ENCODE measurements at regions of chr14 and their contacts with region 1.

Region 1: DNA sequence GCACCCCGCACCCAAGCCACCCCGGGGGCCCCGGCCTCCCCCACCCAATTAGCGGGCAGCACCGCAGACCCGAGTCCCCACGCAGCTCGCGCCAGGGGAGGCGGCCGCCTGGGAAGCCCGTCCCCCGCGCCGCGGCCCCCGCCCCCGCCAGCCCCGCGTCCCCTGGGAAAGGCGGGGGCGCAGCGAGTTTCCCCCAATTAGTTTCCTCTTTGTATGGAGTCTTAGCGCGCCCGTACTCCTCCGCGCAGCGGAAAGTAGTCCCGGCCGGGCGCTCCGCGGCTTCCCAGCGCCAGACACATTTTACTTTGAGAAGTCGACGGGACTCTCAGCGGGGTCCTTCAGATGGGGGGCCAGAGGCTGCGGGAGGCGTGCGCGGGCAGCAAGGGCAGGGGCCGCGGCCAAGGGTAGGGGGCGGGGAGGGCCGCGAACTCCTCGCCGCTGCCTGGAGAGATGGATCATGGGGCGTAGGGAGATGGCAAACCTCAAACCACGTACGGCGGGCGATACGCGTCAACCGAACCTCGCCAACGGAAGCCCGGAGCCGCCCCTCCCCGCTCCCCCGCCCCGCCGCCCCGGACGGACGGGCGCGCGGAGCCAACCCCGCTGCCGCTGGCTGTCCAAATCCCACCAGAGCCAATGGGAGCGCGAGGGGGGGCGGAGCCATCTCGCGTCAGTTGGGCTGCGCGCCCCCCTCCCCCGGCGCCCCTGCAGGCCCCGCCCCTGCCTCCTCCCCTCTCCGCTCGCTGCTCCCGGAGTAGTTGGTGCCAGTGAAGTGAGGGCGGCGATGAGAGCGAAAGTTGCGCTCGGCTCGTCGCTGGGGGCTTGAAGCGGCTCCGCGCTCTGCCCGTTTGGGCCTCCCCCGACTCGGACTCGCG is at the start of gene RCOR1:
- DNase-seq: peak; percentile 61
- H3K4me3 ChIP-seq: peak within 1 kb of the TSS; percentile 91
- H3K27me3 ChIP-seq: no peaks in the 10 kb centered on the region
- CTCF ChIP-seq: no peak
- polyA plus RNA-seq, gene RCOR1: 7.9 and 11.8 TPM in 2 replicates

Region 2: DNA sequence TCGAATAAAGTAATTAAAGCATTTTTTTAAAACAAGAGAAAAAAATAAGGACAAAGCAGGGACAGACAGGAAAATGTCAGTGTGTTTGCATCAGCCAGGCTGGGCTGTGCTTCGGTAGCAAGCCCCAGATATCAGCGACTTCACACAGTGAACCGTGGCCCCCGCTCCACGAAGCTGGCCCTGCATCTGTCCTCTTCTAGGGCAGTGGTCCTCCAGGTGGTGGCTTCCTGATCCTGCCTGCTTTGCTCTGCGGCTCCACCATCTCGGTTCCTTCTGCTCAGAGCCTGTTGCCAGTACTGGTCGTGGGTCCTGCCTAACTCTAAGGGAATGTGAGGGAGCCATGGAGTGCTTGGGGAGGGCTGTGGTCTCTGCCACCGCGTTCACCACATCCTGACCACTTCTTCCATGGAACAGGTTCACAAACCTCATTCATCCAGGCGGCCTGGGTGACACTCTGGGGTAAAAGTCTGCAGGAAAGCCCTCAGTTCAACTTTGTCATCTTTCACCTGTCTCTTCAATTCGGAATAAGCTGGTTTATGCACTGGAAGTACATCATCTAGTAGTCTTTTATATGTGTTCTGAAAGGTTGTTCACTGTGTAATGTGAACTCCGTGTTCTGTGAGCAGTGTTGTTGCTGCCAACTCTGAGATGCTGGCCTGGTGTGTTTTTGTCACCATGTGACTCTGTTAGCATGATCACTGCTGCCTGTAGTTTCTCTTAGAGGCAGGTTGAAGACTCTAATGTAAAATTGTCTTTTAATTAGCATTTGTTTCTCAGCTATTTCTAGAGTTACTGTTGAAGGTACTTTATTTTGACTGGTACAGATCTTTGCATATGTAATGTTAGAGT is 130.4 kb before region 1 on chr14:
- CTCF ChIA-PET with region 1: no interaction called
- POLR2A ChIA-PET with region 1: no interaction called
- DNase-seq: no peak
- H3K4me3 ChIP-seq: no peak overlapping the region
- H3K27me3 ChIP-seq: no peaks in the 10 kb centered on the region
- CTCF ChIP-seq: no peak

Region 3: GRCh38 chr14:102524466-102525218 is 67.5 kb before region 1 on chr14:
- CTCF ChIA-PET with region 1: interaction called, 25 read pairs
- POLR2A ChIA-PET with region 1: no interaction called
- DNase-seq: peak; percentile 90
- H3K4me3 ChIP-seq: peak overlapping the region; percentile 73
- H3K27me3 ChIP-seq: no peaks in the 10 kb centered on the region
- CTCF ChIP-seq: peak; percentile 99

Region 4: GRCh38 chr14:102579696-102580334 is 12.3 kb before region 1 on chr14:
- CTCF ChIA-PET with region 1: interaction called, 6 read pairs
- POLR2A ChIA-PET with region 1: interaction called, 13 read pairs
- DNase-seq: peak; percentile 62
- H3K4me3 ChIP-seq: no peak overlapping the region
- H3K27me3 ChIP-seq: no peaks in the 10 kb centered on the region
- CTCF ChIP-seq: no peak

Region 5: GRCh38 chr14:102608064-102608446 is 15.9 kb after region 1 on chr14:
- CTCF ChIA-PET with region 1: interaction called, 27 read pairs
- POLR2A ChIA-PET with region 1: interaction called, 17 read pairs
- DNase-seq: no peak
- H3K4me3 ChIP-seq: no peak overlapping the region
- H3K27me3 ChIP-seq: no peaks in the 10 kb centered on the region
- CTCF ChIP-seq: no peak

Region 6: GRCh38 chr14:102629808-102630350 is 37.8 kb after region 1 on chr14:
- CTCF ChIA-PET with region 1: interaction called, 12 read pairs
- POLR2A ChIA-PET with region 1: no interaction called
- DNase-seq: no peak
- H3K4me3 ChIP-seq: no peak overlapping the region
- H3K27me3 ChIP-seq: no peaks in the 10 kb centered on the region
- CTCF ChIP-seq: no peak

Region 7: GRCh38 chr14:102644523-102644922 is 52.4 kb after region 1 on chr14:
- CTCF ChIA-PET with region 1: interaction called, 11 read pairs
- POLR2A ChIA-PET with region 1: no interaction called
- DNase-seq: no peak
- H3K4me3 ChIP-seq: no peak overlapping the region
- H3K27me3 ChIP-seq: no peaks in the 10 kb centered on the region
- CTCF ChIP-seq: no peak

Region 8: GRCh38 chr14:102694530-102695166 is 102.5 kb after region 1 on chr14:
- CTCF ChIA-PET with region 1: interaction called, 11 read pairs
- POLR2A ChIA-PET with region 1: no interaction called
- DNase-seq: peak; percentile 13
- H3K4me3 ChIP-seq: no peak overlapping the region
- H3K27me3 ChIP-seq: no peaks in the 10 kb centered on the region
- CTCF ChIP-seq: peak; percentile 58